Heart left ventricle (tissue), 16 donors: ENCODE measurements at regions of chr12 and their contacts with region 1.

Region 1: DNA sequence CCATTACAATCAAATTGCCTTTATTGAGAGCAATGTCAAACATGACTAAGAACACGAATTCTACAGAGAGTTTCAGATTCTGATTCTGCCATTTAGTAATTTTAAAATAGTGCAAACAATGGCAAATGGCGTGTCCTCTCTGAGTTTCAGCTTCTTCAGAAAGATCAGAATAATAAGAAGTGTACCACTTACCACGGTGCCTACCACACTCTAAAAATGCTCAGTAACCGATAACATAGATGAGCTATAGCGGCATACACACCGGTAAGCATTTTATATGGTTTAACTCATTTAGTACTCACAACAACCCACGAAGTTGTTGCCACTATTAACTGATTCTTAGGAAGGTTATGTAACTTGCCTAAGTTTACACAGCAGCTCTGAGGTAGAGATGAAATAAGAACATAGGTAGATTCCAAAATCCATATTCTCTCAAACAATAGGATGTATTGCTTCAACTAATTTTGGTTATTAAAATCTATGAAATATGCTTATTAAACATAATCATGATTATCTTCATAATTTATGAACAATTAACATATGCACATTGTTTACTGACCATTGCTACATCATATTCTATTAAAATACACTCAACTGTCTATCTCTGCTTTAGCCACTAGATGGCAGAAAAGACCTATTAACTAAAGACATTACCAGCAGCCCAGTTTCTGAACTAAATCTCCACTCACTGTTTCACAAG is 38.3 kb downstream of the SLC6A15 start:
- DNase-seq: no peak
- ATAC-seq: no peak
- H3K4me3 ChIP-seq: no peak overlapping the region
- H3K27ac ChIP-seq: no peak overlapping the region
- H3K4me1 ChIP-seq: no peaks in the 10 kb centered on the region
- H3K27me3 ChIP-seq: peaks cover 0 to 3% (median 0%) of the 10 kb centered on the region in 9 donors
- CTCF ChIP-seq: peak; percentile 63 to 86 (median 74)
- POLR2A ChIP-seq: no peak

Region 2: DNA sequence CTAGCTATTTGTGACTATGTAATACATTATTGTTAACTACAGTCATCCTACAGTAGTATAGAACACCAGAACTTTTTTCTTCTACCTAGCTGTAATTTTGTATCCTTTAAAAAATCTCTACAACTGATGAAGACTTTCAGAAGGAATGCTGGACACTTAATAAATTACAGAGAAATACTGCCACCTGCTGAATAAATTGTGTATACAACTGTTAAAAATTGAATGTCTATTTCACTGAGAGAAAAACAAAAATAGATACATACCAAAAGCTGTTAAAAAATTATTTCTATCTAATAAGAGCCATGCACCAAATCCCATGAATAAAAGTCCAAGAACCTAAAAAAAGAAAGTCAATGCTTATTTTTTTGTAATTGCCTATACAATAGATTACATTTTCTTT is 155.2 kb after region 1 on chr12:
- intact Hi-C with region 1: loop called (anchors 1 to 5 kb)
- DNase-seq: no peak
- ATAC-seq: no peak
- H3K4me3 ChIP-seq: no peak overlapping the region
- H3K27ac ChIP-seq: no peak overlapping the region
- H3K4me1 ChIP-seq: no peaks in the 10 kb centered on the region
- H3K27me3 ChIP-seq: peaks cover 0 to 4% (median 0%) of the 10 kb centered on the region in 9 donors
- CTCF ChIP-seq: peak; percentile 23 to 65 (median 50)
- POLR2A ChIP-seq: no peak